ENCODE measurements at regions of chr13 and their contacts with region 1.

Region 1: GRCh38 chr13:22801402-22802003 is 379.3 kb upstream of the SGCG start:
- DNase-seq: no peak
- ATAC-seq: no peak
- H3K4me3 ChIP-seq: no peak overlapping the region
- H3K4me3 Mint-ChIP-seq: no peak overlapping the region
- H3K27ac ChIP-seq: no peak overlapping the region
- H3K27ac Mint-ChIP-seq: no peak overlapping the region
- H3K4me1 ChIP-seq: no peaks in the 10 kb centered on the region
- H3K4me1 Mint-ChIP-seq: no peaks in the 10 kb centered on the region
- H3K27me3 ChIP-seq: peaks cover 0 to 6% of the 10 kb centered on the region in 2 experiments
- H3K27me3 Mint-ChIP-seq: peaks cover 10 to 12% of the 10 kb centered on the region in 2 donors

Region 2: GRCh38 chr13:21948769-21949474 is 852.6 kb before region 1 on chr13:
- CTCF ChIA-PET with region 1: no interaction called
- POLR2A ChIA-PET with region 1: interaction called in 1 of 2 experiments, 11 read pairs
- DNase-seq: no peak
- ATAC-seq: no peak
- H3K4me3 ChIP-seq: no peak overlapping the region
- H3K4me3 Mint-ChIP-seq: no peak overlapping the region
- H3K27ac ChIP-seq: no peak overlapping the region
- H3K27ac Mint-ChIP-seq: no peak overlapping the region
- H3K4me1 ChIP-seq: no peaks in the 10 kb centered on the region
- H3K4me1 Mint-ChIP-seq: peaks cover 0 to 8% (median 3%) of the 10 kb centered on the region in 3 donors
- H3K27me3 ChIP-seq: peaks cover 0 to 3% of the 10 kb centered on the region in 2 experiments
- H3K27me3 Mint-ChIP-seq: no peaks in the 10 kb centered on the region

Region 3: DNA sequence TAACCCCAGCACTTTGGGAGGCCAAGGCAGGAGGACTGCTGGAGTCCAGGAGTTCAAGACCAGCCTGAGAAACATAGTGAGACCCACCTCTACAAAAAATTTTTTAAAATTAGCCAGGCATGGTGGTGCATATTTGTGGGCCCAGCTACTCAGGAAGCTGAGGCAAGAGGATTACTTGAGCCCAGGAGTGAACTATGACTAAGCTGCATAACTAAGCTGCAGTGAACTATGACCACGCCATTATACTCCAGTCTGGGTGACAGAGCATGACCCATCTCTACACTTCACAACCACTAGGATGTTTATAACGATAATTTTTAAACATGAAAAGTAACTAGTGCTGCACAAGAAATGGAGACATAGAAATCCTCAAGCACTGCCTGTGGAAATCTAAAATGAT is 26.6 kb after region 1 on chr13:
- CTCF ChIA-PET with region 1: no interaction called
- POLR2A ChIA-PET with region 1: no interaction called
- DNase-seq: no peak
- ATAC-seq: no peak
- H3K4me3 ChIP-seq: no peak overlapping the region
- H3K4me3 Mint-ChIP-seq: no peak overlapping the region
- H3K27ac ChIP-seq: no peak overlapping the region
- H3K27ac Mint-ChIP-seq: no peak overlapping the region
- H3K4me1 ChIP-seq: no peaks in the 10 kb centered on the region
- H3K4me1 Mint-ChIP-seq: no peaks in the 10 kb centered on the region
- H3K27me3 ChIP-seq: no peaks in the 10 kb centered on the region
- H3K27me3 Mint-ChIP-seq: peaks cover 0 to 3% of the 10 kb centered on the region in 2 donors

Measured in T-cell (primary cell).